SK-N-SH (cell line): ENCODE measurements at regions of chr9 and their contacts with region 1.

Region 1: DNA sequence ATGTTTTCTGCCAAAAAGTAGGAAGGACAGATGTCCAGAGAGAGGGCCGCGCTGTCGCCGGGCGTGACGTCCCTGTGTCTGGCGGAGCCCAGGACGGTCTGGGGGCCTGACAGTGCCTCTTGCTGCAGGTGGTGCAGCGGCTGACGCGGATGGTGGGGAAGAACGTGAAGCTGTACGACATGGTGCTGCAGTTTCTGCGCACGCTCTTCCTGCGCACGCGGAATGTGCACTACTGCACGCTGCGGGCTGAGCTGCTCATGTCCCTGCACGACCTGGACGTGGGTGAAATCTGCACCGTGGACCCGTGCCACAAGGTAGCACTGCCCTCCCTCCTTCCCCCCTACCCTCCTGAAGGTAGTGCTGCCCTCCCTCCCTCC is 7.8 kb downstream of the NELFB start:
- DNase-seq: no peak
- H3K4me3 ChIP-seq: no peak overlapping the region
- H3K27ac ChIP-seq: no peak overlapping the region
- H3K4me1 ChIP-seq: no peaks in the 10 kb centered on the region
- H3K27me3 ChIP-seq: no peaks in the 10 kb centered on the region
- CTCF ChIP-seq: no peak
- EP300 ChIP-seq: no peak
- RAD21 ChIP-seq: no peak

Region 2: DNA sequence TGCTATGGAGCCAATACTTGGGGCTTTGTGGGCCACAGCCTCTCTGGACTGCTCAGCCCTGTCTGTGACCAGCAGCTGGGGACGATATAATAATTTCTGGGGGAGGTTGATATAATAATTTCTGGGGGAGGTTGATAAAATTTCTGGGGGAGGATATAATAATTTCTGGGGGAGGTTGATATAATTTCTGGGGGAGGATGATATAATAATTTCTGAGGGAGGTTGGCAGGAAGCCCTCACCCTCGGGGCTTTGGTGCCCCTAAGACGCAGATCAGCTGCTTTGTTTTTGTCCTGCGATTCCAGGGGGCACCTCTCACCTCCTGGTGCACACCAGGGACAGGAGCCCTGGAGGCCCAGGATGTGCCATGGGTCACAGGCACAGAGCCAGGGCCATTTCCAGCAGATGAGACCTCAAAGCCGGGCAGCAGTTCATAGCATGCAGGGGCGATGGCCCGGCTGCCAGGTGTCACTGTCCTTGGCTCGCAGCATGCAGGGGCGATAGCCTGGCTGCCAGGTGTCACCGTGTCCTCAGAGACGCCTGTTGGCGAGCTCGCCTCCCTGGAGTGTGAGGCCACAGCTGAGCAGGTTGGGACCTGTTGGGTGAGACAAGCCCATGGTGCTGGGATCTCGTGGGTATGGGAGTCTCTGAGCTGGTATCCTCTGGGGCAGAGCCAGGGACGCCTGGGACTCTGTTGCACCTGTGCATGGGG is 10.9 kb after region 1 on chr9:
- CTCF ChIA-PET with region 1: interaction called, 18 read pairs
- POLR2A ChIA-PET with region 1: interaction called, 8 read pairs
- DNase-seq: no peak
- H3K4me3 ChIP-seq: no peak overlapping the region
- H3K27ac ChIP-seq: no peak overlapping the region
- H3K4me1 ChIP-seq: no peaks in the 10 kb centered on the region; a peak in 2 of 4 replicates
- H3K27me3 ChIP-seq: no peaks in the 10 kb centered on the region
- CTCF ChIP-seq: no peak
- EP300 ChIP-seq: no peak
- RAD21 ChIP-seq: no peak